ENCODE measurements at regions of chr14 and their contacts with region 1.

Region 1: DNA sequence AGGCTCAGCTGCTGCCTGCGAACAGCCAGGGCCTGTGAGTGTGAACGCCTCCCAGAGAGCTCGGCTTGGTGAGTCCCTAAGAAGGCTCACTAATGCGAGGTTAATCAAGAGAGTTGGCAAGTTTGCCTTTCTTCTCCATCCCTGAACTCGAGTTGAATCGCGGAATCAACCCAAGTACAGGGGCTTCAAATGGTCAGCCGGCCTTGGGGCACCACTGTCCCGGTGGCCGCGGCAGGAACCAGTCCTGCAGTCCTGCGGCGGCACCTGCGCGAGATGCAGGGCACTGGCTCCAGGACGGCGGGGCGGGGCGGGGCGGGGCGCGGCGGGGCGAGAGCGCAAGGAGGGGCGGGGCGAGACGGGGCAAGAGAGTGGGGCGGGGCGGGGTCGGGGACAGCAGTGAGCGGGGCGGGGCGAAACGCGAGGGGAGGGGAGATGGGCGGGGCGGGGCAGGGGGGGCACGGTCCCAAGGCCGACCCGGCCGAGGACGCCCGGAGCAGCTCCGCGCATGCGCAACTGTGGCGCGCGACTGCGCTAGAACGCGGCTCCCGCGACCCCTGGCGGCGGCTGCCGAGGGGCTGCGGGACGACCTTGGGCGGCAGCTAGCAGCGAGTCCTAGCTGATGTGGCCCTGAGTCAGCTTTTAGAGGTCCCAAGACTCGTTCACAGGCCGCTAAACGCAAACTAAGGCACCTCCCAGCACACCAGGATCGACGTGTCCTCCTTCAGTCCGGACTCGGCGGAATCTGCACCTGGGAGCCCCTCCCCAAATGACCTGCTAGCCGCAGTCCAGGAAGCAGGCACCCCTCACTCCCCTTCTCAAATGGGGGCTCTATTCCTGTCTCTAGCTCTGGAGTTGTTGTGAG is 58.0 kb downstream of the TTC7B start:
- DNase-seq: peak; percentile 88
- H3K4me3 ChIP-seq: peak overlapping the region; percentile 51
- H3K27ac ChIP-seq: peak overlapping the region; percentile 76
- H3K4me1 ChIP-seq: peaks cover 4% of the 10 kb centered on the region
- H3K27me3 ChIP-seq: no peaks in the 10 kb centered on the region
- CTCF ChIP-seq: peak; percentile 74

Region 2: GRCh38 chr14:90383075-90383730 is 375.1 kb before region 1 on chr14:
- intact Hi-C with region 1: loop called (anchors 10 kb)
- DNase-seq: peak; percentile 99
- H3K4me3 ChIP-seq: peak overlapping the region; percentile 43
- H3K27ac ChIP-seq: peak overlapping the region; percentile 99
- H3K4me1 ChIP-seq: peaks cover 19% of the 10 kb centered on the region
- H3K27me3 ChIP-seq: no peaks in the 10 kb centered on the region
- CTCF ChIP-seq: no peak

Measured in colonic mucosa (tissue), 4 donors.